Activated CD4-positive, alpha-beta T cell treated with anti-CD3 and anti-CD28 coated beads for 36 hours (primary cell): ENCODE measurements at regions of chr18 and their contacts with region 1.

Region 1: GRCh38 chr18:9287036-9287435 is 47.5 kb upstream of the TWSG1 start:
- DNase-seq: no peak
- ATAC-seq: no peak
- H3K4me3 Mint-ChIP-seq: no peak overlapping the region
- H3K27ac Mint-ChIP-seq: no peak overlapping the region
- H3K4me1 Mint-ChIP-seq: no peaks in the 10 kb centered on the region
- H3K27me3 Mint-ChIP-seq: no peaks in the 10 kb centered on the region

Region 2: DNA sequence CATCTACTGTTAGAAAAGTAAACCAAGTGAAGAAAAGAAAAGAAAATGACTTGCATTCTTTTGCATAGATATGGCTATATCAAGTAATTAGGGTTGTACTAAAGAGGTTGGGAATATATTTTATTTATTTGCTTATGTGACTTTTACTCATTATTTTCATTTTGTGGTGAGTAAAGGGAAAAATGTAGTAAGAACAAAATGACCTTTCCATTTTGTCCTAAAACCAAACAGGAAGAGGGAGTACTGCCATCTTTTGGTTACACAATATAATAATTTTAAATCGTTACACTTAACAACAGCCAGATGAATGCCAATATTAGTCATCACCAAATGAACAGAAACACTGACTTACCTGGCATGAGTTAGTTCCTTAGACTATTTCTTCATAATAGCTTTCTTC is 231.9 kb before region 1 on chr18:
- CTCF ChIA-PET with region 1: no interaction called
- POLR2A ChIA-PET with region 1: no interaction called
- intact Hi-C with region 1: loop called in 1 of 2 experiments (anchors 5 kb)
- DNase-seq: no peak
- ATAC-seq: peak; percentile 64
- H3K4me3 Mint-ChIP-seq: no peak overlapping the region
- H3K27ac Mint-ChIP-seq: no peak overlapping the region
- H3K4me1 Mint-ChIP-seq: peaks cover 2% of the 10 kb centered on the region
- H3K27me3 Mint-ChIP-seq: peaks cover 1% of the 10 kb centered on the region